A673 (cell line): ENCODE measurements at regions of chr16 and their contacts with region 1.

Region 1: GRCh38 chr16:65117811-65118448 is 3.9 kb downstream of the CDH11 start:
- DNase-seq: peak; percentile 91
- H3K4me3 ChIP-seq: peak overlapping the region; percentile 79
- H3K27ac ChIP-seq: no peak overlapping the region
- H3K4me1 ChIP-seq: peaks cover 33% of the 10 kb centered on the region
- H3K27me3 ChIP-seq: no peaks in the 10 kb centered on the region
- CTCF ChIP-seq: peak; percentile 95

Region 2: GRCh38 chr16:63945806-63946205 is 1172.1 kb before region 1 on chr16:
- CTCF ChIA-PET with region 1: no interaction called
- POLR2A ChIA-PET with region 1: no interaction called
- intact Hi-C with region 1: loop called (anchors 10 kb)
- DNase-seq: no peak
- H3K4me3 ChIP-seq: no peak overlapping the region
- H3K27ac ChIP-seq: no peak overlapping the region
- H3K4me1 ChIP-seq: no peaks in the 10 kb centered on the region
- H3K27me3 ChIP-seq: no peaks in the 10 kb centered on the region
- CTCF ChIP-seq: no peak

Region 3: GRCh38 chr16:64974381-64974780 is 143.5 kb before region 1 on chr16:
- CTCF ChIA-PET with region 1: no interaction called
- POLR2A ChIA-PET with region 1: no interaction called
- intact Hi-C with region 1: loop called (anchors 5 kb)
- DNase-seq: peak; percentile 74
- H3K4me3 ChIP-seq: no peak overlapping the region
- H3K27ac ChIP-seq: no peak overlapping the region
- H3K4me1 ChIP-seq: peaks cover 72% of the 10 kb centered on the region
- H3K27me3 ChIP-seq: no peaks in the 10 kb centered on the region
- CTCF ChIP-seq: no peak

Region 4: GRCh38 chr16:65375651-65376050 is 257.7 kb after region 1 on chr16:
- CTCF ChIA-PET with region 1: no interaction called
- POLR2A ChIA-PET with region 1: no interaction called
- intact Hi-C with region 1: loop called (anchors 10 kb)
- DNase-seq: no peak
- H3K4me3 ChIP-seq: no peak overlapping the region
- H3K27ac ChIP-seq: no peak overlapping the region
- H3K4me1 ChIP-seq: peaks cover 11% of the 10 kb centered on the region
- H3K27me3 ChIP-seq: no peaks in the 10 kb centered on the region
- CTCF ChIP-seq: no peak

Region 5: DNA sequence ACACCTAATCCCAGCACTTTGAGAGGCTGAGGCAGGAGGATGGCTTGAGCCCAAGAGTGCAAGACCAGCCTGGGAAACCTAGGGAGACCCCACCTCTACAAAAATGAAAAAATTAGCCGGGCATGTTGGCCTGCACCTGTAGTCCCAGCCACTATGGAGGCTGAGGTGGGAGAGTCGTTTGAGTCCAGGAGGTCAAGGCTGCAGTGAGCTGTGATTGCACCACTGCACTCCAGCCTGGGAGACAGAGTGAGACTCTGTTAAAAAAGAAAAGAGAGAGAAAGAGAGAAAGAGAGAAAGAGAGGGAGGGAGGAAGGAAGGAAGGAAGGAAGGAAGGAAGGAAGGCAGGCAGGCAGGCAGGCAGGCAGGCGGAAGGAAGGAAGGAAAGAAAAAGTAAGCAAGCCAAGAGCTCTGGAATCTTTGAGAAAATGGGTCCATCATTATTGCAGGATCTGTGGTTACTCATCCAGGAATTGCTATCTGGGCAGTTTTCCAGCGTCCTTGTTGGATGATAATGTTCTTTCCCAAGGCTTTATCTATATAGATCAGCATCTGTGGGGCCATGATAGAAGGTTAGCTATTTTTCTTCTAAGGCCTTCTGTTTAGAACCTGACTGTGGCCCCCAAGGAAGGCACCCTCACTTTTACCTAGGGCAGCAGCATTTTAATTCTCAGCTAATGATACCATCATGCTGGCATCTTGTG is 715.4 kb after region 1 on chr16:
- CTCF ChIA-PET with region 1: no interaction called
- POLR2A ChIA-PET with region 1: no interaction called
- intact Hi-C with region 1: loop called (anchors 5 kb)
- DNase-seq: peak; percentile 94
- H3K4me3 ChIP-seq: no peak overlapping the region
- H3K27ac ChIP-seq: peak overlapping the region; percentile 97
- H3K4me1 ChIP-seq: peaks cover 56% of the 10 kb centered on the region
- H3K27me3 ChIP-seq: no peaks in the 10 kb centered on the region
- CTCF ChIP-seq: no peak